GM18951 (cell line): ENCODE measurements at regions of chr20 and their contacts with region 1.

Region 1: DNA sequence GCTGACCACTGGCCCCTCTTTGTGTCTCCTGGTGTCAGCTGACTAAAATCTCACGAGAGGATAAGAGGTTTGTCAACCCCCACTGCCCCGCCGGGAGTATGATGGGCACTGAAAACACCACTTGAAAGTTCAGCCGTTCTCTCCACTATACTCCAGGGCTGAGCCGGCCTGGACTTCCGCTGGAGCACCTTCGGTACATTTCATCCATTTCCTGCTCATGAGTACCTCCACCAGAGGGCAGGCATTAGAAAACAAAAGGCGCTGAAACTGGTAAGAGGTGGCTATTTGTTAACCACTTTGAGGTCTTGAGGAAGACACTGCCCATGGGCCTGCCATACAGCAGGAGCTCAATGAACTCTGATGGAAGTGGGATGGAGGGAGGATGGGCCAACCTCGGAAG is 17.9 kb upstream of the ANKRD60 start:
- POLR2A ChIP-seq: no peak

Region 2: DNA sequence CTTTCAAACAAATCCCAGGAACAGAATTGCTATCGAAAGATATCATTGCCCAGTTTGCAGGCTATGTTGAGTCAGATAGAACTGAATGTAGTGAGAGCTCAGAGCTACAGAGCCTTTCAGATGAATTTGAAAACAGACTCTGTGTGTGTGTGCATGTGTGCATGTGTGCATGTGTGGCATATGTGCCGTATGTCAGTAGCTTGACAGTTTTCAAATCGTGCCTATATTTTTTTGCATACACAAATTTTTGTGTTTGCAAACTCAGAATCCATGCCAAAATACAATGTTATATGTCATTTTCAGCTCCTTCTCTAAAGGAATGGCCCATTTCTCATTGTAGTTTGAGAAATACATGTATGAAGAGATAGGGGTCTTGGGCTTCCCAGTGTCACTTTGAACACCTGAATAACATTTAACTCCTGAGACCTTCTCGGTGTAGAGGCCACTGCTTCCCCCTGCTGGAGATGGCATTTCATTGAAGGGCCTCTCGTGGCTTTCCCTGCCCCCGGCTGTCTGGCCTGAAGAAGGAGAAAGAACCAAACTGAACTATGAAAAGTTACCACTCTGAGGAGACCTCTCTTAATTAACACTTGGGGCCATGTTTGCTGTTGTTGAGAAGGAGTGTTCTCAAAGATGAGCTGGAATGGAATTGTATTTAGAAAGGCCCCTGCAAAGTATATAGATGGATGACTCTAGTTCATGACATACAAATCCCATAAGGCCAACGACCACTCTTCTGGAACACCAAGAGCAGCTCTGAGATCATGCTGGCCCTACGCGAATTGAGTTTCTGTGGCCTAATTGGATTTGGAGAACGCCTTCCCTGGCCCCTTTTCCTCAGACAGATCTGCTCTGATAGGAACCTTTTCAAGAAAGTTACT is 201.4 kb after region 1 on chr20:
- in situ Hi-C with region 1: loop called (anchors 10 kb)
- POLR2A ChIP-seq: no peak